ENCODE measurements at regions of chr10 and their contacts with region 1.

Region 1: GRCh38 chr10:11793762-11794479 is 29.2 kb upstream of the PROSER2 start:
- DNase-seq: no peak
- ATAC-seq: no peak
- H3K4me3 Mint-ChIP-seq: no peak overlapping the region
- H3K27ac Mint-ChIP-seq: no peak overlapping the region
- H3K4me1 Mint-ChIP-seq: peaks cover 3% of the 10 kb centered on the region
- H3K27me3 Mint-ChIP-seq: no peaks in the 10 kb centered on the region
- CTCF ChIP-seq: no peak

Region 2: GRCh38 chr10:13074561-13075451 is 1280.9 kb after region 1 on chr10:
- CTCF ChIA-PET with region 1: no interaction called
- POLR2A ChIA-PET with region 1: no interaction called
- intact Hi-C with region 1: loop called (anchors 10 kb)
- DNase-seq: no peak
- ATAC-seq: peak; percentile 34
- H3K4me3 Mint-ChIP-seq: no peak overlapping the region
- H3K27ac Mint-ChIP-seq: no peak overlapping the region
- H3K4me1 Mint-ChIP-seq: peaks cover 3% of the 10 kb centered on the region
- H3K27me3 Mint-ChIP-seq: peaks cover 28% of the 10 kb centered on the region
- CTCF ChIP-seq: no peak

Measured in activated B cell treated with CpG ODN at 0.5 μM for 24 hours (primary cell).